Breast epithelium (tissue), 4 donors: ENCODE measurements at regions of chr3 and their contacts with region 1.

Region 1: DNA sequence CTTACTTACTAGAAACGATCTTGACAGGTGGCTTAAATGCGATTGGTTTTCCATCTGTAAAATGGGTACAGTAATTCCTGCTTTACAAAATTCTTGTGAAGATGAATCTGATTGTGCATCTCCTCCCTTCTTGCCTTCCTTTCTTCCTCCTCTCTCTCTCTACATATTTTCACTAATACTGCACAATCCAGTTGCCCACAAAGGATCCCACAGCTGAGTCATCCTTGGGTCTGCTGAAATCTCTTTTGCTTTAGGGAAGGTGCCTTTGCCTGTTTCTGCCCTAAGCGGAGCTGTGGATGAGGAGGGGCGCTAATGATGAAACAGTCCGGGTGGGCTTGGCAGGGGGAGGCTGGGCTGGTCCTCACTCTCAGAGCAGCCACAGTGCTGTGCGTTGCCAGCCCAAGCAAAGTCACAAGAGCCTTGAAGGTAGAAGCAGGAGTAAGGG is 46.1 kb downstream of the AMOTL2 start:
- DNase-seq: peak in 1 of 2 donors; percentile 37
- H3K4me3 ChIP-seq: no peak overlapping the region
- H3K27ac ChIP-seq: peak overlapping the region; percentile 74
- H3K4me1 ChIP-seq: peaks cover 5 to 26% of the 10 kb centered on the region in 2 donors
- H3K27me3 ChIP-seq: no peaks in the 10 kb centered on the region
- CTCF ChIP-seq: no peak
- POLR2A ChIP-seq: no peak

Region 2: DNA sequence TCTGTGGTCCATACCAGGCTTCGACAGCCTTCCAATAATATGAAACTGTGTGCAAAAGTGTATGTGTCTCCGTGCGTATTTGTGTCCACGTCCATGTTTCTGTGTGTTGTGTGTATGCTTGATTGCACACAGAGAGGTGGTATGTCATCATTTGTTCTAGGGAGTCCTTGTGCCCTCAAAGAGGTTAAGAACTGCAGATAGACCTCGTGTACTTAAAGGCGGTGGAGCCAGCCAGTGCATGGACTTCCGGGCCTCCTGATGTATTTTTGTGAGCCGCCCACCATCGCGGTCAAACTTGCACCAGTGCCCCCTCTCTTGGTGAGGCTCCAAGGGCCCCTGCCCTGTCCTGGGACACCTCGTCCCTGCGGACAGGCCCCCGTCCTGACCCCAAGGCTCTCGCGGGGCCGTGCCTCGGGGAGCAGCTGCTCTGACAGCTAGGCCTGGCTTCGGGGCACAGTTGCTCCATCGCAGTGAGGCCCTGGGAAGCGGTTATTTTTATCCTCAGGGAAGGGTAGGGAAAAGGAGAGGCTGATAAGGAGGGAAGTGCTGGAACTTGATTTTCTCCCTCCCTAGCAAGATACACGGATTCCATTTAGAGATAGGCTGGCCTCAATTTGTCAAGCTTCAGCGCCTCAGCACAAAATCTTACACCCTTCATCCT is 76.3 kb before region 1 on chr3:
- intact Hi-C with region 1: loop called (anchors 2 kb)
- DNase-seq: no peak
- H3K4me3 ChIP-seq: no peak overlapping the region
- H3K27ac ChIP-seq: peak overlapping the region in 1 of 2 donors; percentile 99
- H3K4me1 ChIP-seq: peaks cover 0 to 6% of the 10 kb centered on the region in 2 donors
- H3K27me3 ChIP-seq: no peaks in the 10 kb centered on the region
- CTCF ChIP-seq: no peak
- POLR2A ChIP-seq: no peak

Region 3: DNA sequence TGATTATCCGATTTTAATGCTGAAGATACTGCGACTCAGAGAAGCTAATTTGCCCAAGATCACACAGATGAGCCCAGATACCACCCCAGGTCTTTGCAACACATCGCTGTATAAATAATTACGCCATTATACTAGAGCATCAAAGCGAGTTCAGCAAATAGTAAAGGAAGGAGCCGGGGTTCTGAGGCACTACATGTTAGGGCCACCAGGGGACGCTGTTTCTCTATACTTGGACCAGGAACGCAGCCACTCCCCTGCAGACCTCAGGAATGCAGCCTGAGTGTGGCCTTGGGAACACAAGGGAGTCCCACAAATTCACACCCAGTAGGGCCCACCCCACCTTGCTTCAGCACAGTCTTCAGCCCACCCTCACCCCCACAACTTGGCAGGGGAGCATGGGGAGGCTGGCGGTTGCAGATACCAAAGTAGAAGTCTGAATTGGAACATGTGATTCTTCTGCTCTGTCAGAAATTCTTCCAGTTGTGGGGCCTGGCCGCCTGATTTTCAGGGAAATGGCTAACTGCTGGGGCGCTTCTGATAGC is 19.7 kb before region 1 on chr3:
- intact Hi-C with region 1: no loop called
- DNase-seq: peak; percentile 84 to 87
- H3K4me3 ChIP-seq: peak overlapping the region in 1 of 3 donors; percentile 27
- H3K27ac ChIP-seq: peak overlapping the region; percentile 64 to 94
- H3K4me1 ChIP-seq: peaks cover 0 to 11% of the 10 kb centered on the region in 2 donors
- H3K27me3 ChIP-seq: no peaks in the 10 kb centered on the region
- CTCF ChIP-seq: peak; percentile 100
- POLR2A ChIP-seq: no peak